ENCODE measurements at regions of chr12 and their contacts with region 1.

Region 1: DNA sequence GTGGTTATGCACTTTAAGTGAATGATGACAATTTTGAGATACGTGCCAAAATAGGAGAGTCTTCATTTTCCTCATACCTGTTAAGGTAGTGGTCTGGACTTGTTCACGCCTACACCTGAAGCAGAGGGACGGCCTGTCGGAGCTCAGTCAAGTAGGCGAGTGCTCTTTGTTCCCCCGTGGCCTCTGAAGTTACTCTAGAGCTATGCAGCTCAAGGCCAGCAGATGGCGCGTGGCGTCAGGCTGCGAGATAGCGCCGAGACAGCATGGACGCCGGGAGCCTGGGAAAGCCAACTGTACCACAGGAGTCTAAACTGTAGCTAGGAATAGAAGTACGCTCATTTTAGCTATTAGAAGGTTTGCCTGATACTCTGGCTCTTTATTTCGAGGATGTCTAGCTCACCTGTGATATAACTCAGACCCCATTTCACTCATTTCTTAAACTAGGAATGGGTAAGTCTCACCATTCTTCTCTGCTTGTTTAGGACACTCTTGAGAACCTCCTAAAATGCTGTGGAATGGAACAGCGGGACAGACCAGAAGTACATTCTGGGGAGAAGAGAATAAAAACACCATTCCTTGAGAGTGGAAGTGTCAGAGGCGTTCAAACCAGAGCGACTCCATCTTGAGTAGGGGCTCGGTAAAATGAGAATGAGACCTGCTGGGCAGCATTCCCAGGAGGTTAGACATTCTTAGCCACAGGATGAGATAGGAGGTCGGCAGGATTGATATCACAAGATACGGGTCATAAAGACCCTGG is 267.4 kb upstream of the HMGA2 start:
- DNase-seq: peak; percentile 88
- H3K4me3 Mint-ChIP-seq: no peak overlapping the region
- H3K27ac Mint-ChIP-seq: peak overlapping the region; percentile 49
- H3K4me1 Mint-ChIP-seq: peaks cover 6% of the 10 kb centered on the region
- H3K27me3 Mint-ChIP-seq: no peaks in the 10 kb centered on the region
- CTCF ChIP-seq: peak; percentile 89

Region 2: GRCh38 chr12:65411171-65411570 is 145.7 kb before region 1 on chr12:
- CTCF ChIA-PET with region 1: interaction called, 11 read pairs
- POLR2A ChIA-PET with region 1: no interaction called
- intact Hi-C with region 1: no loop called
- DNase-seq: no peak
- H3K4me3 Mint-ChIP-seq: no peak overlapping the region
- H3K27ac Mint-ChIP-seq: no peak overlapping the region
- H3K4me1 Mint-ChIP-seq: peaks cover 9% of the 10 kb centered on the region
- H3K27me3 Mint-ChIP-seq: no peaks in the 10 kb centered on the region
- CTCF ChIP-seq: no peak

Region 3: DNA sequence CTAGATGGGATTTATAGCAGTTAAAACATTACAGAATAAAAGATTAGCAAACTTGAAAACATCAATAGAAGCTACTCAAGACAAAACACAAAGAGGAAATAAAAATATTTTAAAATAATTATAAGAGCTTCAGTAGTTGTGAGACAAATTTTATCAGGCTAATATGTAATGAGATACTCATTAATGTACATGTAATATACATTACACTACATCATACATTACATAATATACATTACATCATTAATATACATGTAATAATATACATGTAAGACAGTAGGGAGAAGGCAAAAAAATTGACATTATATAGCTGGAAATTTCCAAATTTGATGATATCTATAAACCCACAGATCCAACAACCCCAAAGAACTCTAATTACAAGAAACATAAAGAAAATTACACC is 18.0 kb after region 1 on chr12:
- CTCF ChIA-PET with region 1: interaction called, 13 read pairs
- POLR2A ChIA-PET with region 1: interaction called, 4 read pairs
- intact Hi-C with region 1: no loop called
- DNase-seq: no peak
- H3K4me3 Mint-ChIP-seq: no peak overlapping the region
- H3K27ac Mint-ChIP-seq: no peak overlapping the region
- H3K4me1 Mint-ChIP-seq: no peaks in the 10 kb centered on the region
- H3K27me3 Mint-ChIP-seq: no peaks in the 10 kb centered on the region
- CTCF ChIP-seq: no peak

Region 4: DNA sequence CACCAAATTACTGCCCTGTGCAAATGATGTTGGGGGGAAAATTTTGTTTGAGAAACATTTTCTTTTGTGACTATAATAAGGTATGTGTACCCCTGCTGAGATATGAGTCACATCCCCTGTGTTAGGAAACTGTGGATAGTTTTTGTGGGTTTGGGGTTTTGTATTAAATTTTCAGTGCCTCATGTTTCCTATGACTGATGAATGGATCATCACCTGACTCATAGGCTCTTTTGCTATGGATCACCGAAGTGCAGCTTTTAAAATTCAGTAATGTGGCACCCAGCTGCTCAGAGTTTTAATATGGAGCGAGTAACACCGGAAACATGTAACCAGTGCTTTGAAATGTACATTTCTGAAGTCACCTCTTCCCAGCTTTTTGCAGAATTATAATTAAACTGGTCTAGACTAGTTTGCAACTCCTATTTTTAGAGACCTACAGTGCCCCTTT is 100.1 kb after region 1 on chr12:
- CTCF ChIA-PET with region 1: no interaction called
- POLR2A ChIA-PET with region 1: no interaction called
- intact Hi-C with region 1: no loop called
- DNase-seq: peak; percentile 96
- H3K4me3 Mint-ChIP-seq: no peak overlapping the region
- H3K27ac Mint-ChIP-seq: peak overlapping the region; percentile 94
- H3K4me1 Mint-ChIP-seq: peaks cover 61% of the 10 kb centered on the region
- H3K27me3 Mint-ChIP-seq: no peaks in the 10 kb centered on the region
- CTCF ChIP-seq: no peak

Region 5: GRCh38 chr12:65685514-65685913 is 128.7 kb after region 1 on chr12:
- CTCF ChIA-PET with region 1: interaction called, 11 read pairs
- POLR2A ChIA-PET with region 1: no interaction called
- intact Hi-C with region 1: loop called (anchors 5 kb)
- DNase-seq: peak; percentile 66
- H3K4me3 Mint-ChIP-seq: no peak overlapping the region
- H3K27ac Mint-ChIP-seq: no peak overlapping the region
- H3K4me1 Mint-ChIP-seq: peaks cover 1% of the 10 kb centered on the region
- H3K27me3 Mint-ChIP-seq: no peaks in the 10 kb centered on the region
- CTCF ChIP-seq: peak; percentile 40

Region 6: DNA sequence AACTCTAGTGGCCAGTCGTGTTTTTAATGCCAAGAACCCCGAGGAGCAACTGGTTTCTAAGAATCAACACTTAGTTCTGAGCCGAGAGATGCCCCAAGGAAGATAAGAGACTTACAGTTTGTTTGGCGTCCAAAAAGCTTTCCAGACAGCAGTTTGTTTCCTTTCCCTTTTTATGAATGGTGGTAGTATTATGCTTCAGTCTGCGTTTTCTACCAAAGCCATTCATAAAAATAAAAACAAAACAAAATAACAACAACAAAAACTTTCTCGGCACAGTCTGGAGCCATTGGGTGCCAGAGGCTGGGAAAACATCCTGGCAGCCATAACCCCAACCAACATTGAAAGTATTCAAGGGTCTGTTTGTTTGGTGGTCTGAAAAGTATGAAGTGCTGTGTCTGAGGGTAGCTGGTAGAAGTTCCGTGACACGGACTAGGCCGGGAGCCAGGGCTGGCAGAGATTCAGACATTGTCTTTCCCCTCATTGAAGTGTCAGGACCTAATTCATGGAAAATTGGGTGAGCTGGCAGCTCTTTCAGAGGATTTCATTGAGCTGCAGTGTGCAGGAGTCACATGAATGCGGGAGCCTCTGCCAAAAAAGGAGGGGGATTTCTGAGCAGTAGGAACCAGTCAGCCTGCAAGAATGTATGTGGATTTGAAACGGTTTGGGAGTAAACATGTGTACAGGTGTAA is 391.6 kb after region 1 on chr12:
- CTCF ChIA-PET with region 1: no interaction called
- POLR2A ChIA-PET with region 1: no interaction called
- intact Hi-C with region 1: loop called (anchors 1 kb)
- DNase-seq: peak; percentile 98
- H3K4me3 Mint-ChIP-seq: peak overlapping the region; percentile 68
- H3K27ac Mint-ChIP-seq: peak overlapping the region; percentile 96
- H3K4me1 Mint-ChIP-seq: peaks cover 63% of the 10 kb centered on the region
- H3K27me3 Mint-ChIP-seq: no peaks in the 10 kb centered on the region
- CTCF ChIP-seq: no peak

Region 7: GRCh38 chr12:66132408-66132807 is 575.5 kb after region 1 on chr12:
- CTCF ChIA-PET with region 1: no interaction called
- POLR2A ChIA-PET with region 1: no interaction called
- intact Hi-C with region 1: no loop called
- DNase-seq: peak; percentile 31
- H3K4me3 Mint-ChIP-seq: peak overlapping the region; percentile 35
- H3K27ac Mint-ChIP-seq: no peak overlapping the region
- H3K4me1 Mint-ChIP-seq: peaks cover 26% of the 10 kb centered on the region
- H3K27me3 Mint-ChIP-seq: no peaks in the 10 kb centered on the region
- CTCF ChIP-seq: no peak

Measured in MCF 10A (cell line).